Ovary (tissue), 10 donors: ENCODE measurements at regions of chr12 and their contacts with region 1.

Region 1: GRCh38 chr12:49967042-49967776 is 5.5 kb downstream of the AQP5 start:
- DNase-seq: peak; percentile 80 to 93 (median 88)
- H3K4me3 ChIP-seq: peak overlapping the region; percentile 4
- H3K27ac ChIP-seq: no peak overlapping the region
- H3K4me1 ChIP-seq: peaks cover 10% of the 10 kb centered on the region
- H3K27me3 ChIP-seq: no peaks in the 10 kb centered on the region
- CTCF ChIP-seq: peak; percentile 68 to 88 (median 84)
- EP300 ChIP-seq: no peak
- POLR2A ChIP-seq: no peak

Region 2: DNA sequence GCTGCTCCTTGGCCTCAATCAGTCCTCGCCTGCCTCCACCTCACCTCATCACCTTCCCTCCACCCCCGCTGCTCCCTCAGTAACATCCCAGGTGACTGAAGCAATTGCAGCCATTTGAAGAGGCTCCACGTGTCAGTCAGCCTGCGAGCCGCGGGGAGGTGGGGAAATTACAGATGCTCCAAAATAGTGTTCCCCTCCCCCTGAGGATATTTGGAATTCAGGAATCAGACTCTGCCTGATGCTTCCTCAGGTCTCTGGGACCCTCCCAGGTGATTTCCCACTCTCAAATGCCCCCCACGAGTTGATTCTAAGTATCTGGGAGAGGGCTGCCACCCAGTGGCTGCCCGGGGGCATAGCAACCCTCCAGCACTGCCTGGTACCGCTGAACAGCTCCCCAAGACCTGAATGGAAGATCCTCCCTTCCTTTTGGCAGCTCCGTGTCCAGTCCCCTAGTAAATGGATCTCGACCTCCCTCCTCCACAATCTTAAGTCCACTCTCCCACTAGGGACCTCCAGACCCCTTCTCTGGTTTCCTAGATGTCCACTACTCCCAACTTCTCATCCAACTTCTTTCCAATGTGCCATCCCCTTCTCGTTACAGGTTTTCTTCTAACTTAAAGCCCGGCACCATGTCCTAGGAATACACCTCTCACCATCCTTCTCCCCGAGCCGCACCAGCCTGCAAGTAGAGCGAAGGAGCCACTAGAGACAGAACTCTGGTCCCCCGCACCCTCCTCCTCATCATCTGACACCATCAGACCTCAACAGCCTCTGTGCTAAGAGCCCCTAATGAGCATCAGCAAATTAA is 88.8 kb after region 1 on chr12:
- intact Hi-C with region 1: loop called in 3 of 4 experiments (anchors 5 to 10 kb)
- DNase-seq: peak in 4 of 5 donors; percentile 48 to 59 (median 54)
- H3K4me3 ChIP-seq: no peak overlapping the region
- H3K27ac ChIP-seq: no peak overlapping the region
- H3K4me1 ChIP-seq: peaks cover 8% of the 10 kb centered on the region
- H3K27me3 ChIP-seq: no peaks in the 10 kb centered on the region
- CTCF ChIP-seq: peak; percentile 62 to 87 (median 77)
- EP300 ChIP-seq: no peak
- POLR2A ChIP-seq: no peak

Region 3: DNA sequence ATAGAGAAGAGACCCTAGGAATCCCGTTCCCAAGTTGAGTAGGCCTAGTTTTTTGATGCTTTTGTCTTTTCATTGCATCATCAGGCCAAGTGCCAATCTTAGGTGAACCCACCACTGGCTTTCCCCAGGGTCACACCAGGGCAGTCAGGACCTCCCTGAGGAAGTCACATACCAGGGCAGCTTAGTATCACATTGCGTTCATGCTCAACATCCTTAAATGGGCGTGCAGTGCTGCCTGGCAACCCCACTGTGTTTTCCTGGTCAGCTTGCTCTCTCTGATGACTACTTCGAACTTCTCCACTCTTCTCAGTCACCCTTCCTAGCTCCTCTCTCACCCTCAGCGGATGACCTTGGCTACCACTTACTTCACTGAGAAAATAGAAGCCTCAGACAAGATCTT is 99.2 kb after region 1 on chr12:
- intact Hi-C with region 1: loop called in 3 of 4 experiments (anchors 5 kb)
- DNase-seq: no peak
- H3K4me3 ChIP-seq: no peak overlapping the region
- H3K27ac ChIP-seq: no peak overlapping the region
- H3K4me1 ChIP-seq: peaks cover 1% of the 10 kb centered on the region
- H3K27me3 ChIP-seq: no peaks in the 10 kb centered on the region
- CTCF ChIP-seq: no peak
- EP300 ChIP-seq: no peak
- POLR2A ChIP-seq: no peak

Region 4: DNA sequence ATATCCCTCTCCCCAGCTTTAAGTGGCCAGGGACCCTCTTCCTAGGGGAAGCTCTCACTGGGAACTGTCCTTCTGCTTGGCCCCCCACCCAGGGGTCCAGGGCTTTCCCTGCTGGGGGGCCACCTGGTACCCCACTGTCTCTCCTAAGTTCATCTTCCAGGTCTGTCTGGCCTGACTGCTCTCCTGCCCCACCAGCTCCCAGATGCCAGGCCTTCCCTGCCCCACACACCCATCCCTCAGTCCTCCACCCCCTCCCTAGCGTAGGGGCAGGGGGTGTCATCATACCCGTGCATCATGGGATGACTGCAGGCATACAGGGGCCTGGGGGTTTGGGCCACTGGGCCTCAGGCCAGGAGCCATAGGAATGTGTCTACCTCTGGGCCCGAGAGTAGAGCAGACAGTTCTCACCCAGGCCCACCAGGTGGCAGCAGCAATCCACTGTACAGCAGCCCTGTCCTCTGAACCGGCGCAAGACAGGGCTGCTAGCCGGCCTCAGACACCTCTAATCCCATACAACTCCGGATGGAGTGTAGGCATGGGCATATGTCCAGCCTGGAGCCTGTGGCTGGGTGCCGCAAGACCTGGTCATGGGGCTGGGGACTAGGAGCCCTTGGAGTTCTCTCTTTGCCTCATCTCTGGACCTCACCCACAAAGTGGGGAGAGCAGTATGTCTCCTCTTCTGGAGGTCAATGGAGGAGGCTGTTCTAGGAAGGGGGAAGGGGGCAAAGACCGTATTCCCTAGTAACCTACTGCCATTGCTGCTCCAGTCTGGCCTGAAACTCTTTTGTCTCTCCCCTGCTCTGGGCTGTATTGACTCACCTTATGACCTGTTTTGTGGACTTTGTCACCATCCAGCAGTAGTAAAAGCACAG is 108.0 kb after region 1 on chr12:
- intact Hi-C with region 1: loop called in 1 of 4 experiments (anchors 5 kb)
- DNase-seq: peak; percentile 78 to 90 (median 88)
- H3K4me3 ChIP-seq: no peak overlapping the region
- H3K27ac ChIP-seq: no peak overlapping the region
- H3K4me1 ChIP-seq: no peaks in the 10 kb centered on the region
- H3K27me3 ChIP-seq: no peaks in the 10 kb centered on the region
- CTCF ChIP-seq: peak; percentile 87 to 96 (median 92)
- EP300 ChIP-seq: no peak
- POLR2A ChIP-seq: no peak

Region 5: GRCh38 chr12:50174971-50175715 is 207.9 kb after region 1 on chr12:
- intact Hi-C with region 1: loop called in 1 of 4 experiments (anchors 10 kb)
- DNase-seq: no peak
- H3K4me3 ChIP-seq: no peak overlapping the region
- H3K27ac ChIP-seq: no peak overlapping the region
- H3K4me1 ChIP-seq: no peaks in the 10 kb centered on the region
- H3K27me3 ChIP-seq: no peaks in the 10 kb centered on the region
- CTCF ChIP-seq: peak; percentile 41 to 78 (median 77)
- EP300 ChIP-seq: no peak
- POLR2A ChIP-seq: peak; percentile 16